ENCODE measurements at regions of chr1 and their contacts with region 1.

Region 1: GRCh38 chr1:243325305-243325890 is 69.6 kb downstream of the SDCCAG8 start:
- DNase-seq: no peak

Region 2: GRCh38 chr1:242467556-242468145 is 857.7 kb before region 1 on chr1:
- intact Hi-C with region 1: loop called (anchors 5 kb)
- DNase-seq: peak in 9 of 10 donors; percentile 27 to 92 (median 69)

Region 3: GRCh38 chr1:242828199-242828598 is 497.2 kb before region 1 on chr1:
- intact Hi-C with region 1: loop called (anchors 2 kb)
- DNase-seq: peak; percentile 22 to 94 (median 53)

Region 4: DNA sequence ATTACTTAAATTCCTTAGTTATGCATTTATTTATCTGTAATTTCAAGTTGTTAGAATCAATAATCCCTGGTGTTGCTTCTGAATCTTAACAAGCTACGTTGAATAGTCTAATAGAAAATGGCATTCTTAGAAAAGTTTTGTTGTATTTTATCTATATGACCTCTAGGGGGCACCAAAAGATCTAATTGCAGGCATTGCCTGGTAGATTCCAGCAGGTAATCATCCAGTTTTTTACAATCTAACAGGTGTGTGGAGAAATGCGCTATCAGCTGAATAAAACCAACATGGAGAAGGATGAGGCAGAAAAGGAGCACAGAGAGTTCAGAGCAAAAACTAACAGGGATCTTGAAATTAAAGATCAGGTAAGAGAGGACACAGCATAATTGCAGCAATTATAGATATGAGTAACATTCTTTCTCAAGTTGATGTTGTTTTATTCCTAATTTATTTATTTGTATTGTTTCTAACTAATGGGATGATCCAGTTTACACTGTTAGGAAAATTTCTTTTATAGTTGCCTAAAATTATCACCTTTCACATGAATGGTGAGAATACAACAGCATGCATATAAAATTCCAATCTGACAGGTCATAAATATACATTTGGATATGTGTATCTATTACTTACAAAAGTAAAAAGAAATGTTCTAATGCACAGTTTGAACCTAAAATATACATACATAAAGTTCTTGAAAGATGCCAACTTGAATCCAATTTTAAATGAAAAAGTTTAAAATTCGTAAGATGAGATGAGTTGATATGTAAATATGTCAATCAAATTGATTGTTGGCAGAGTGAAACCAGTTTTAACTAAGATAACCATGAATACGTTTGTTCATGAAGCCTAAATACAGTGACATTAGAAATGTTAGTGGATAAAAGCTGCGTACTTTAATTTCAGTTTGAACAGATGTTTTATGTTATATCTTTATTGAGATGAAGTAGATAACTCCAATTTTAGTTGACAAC is 18.9 kb after region 1 on chr1:
- intact Hi-C with region 1: no loop called
- DNase-seq: no peak

Region 5: GRCh38 chr1:243409284-243409683 is 83.9 kb after region 1 on chr1:
- intact Hi-C with region 1: no loop called
- DNase-seq: no peak